ENCODE measurements at regions of chr4 and their contacts with region 1.

Region 1: GRCh38 chr4:78056265-78057129 is 626 bp upstream of the FRAS1 start:
- DNase-seq: peak; percentile 98
- H3K4me3 Mint-ChIP-seq: peak overlapping the region; percentile 78
- H3K27ac Mint-ChIP-seq: no peak overlapping the region
- H3K4me1 Mint-ChIP-seq: peaks cover 6% of the 10 kb centered on the region
- H3K27me3 Mint-ChIP-seq: no peaks in the 10 kb centered on the region
- CTCF ChIP-seq: no peak

Region 2: GRCh38 chr4:77994194-77994721 is 62.2 kb before region 1 on chr4:
- CTCF ChIA-PET with region 1: interaction called, 10 read pairs
- POLR2A ChIA-PET with region 1: interaction called, 4 read pairs
- intact Hi-C with region 1: loop called (anchors 2 kb)
- DNase-seq: peak; percentile 78
- H3K4me3 Mint-ChIP-seq: no peak overlapping the region
- H3K27ac Mint-ChIP-seq: no peak overlapping the region
- H3K4me1 Mint-ChIP-seq: peaks cover 6% of the 10 kb centered on the region
- H3K27me3 Mint-ChIP-seq: no peaks in the 10 kb centered on the region
- CTCF ChIP-seq: peak; percentile 45

Region 3: DNA sequence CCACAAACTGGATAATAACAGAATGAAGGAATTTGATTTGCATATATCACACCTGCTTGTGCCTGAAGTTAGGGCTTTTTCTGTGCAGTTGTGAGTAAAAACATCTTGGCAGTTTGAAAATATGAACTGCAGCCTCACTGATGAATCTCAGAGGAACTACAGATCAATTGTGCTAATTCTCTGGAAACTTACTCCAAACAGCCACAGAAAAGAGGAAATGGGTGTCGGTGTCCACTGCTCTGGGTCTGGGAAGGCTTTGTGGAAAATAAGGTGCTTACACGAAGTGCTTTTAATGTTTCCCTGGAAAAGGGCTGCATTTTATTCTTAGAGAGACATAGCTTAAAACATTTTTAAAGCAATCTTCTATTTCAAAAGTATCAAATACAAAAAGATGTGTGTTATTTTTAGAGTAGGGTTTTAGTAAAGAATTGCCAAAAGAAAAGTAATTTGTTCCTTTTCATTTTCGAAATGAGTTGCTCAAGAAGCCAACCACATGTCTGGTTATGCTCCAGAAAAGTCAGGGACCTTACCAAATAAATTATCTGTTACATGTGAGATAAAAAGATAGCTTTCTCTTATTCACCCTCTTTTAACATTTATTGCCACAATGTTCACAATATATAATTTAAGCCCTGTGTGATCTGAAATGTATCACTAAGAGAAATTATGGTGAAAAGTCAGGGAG is 240.8 kb after region 1 on chr4:
- CTCF ChIA-PET with region 1: no interaction called
- POLR2A ChIA-PET with region 1: no interaction called
- intact Hi-C with region 1: no loop called
- DNase-seq: no peak
- H3K4me3 Mint-ChIP-seq: no peak overlapping the region
- H3K27ac Mint-ChIP-seq: no peak overlapping the region
- H3K4me1 Mint-ChIP-seq: peaks cover 33% of the 10 kb centered on the region
- H3K27me3 Mint-ChIP-seq: no peaks in the 10 kb centered on the region
- CTCF ChIP-seq: no peak

Region 4: GRCh38 chr4:78876568-78877320 is 820.2 kb after region 1 on chr4:
- CTCF ChIA-PET with region 1: no interaction called
- POLR2A ChIA-PET with region 1: no interaction called
- intact Hi-C with region 1: loop called (anchors 10 kb)
- DNase-seq: peak; percentile 61
- H3K4me3 Mint-ChIP-seq: no peak overlapping the region
- H3K27ac Mint-ChIP-seq: no peak overlapping the region
- H3K4me1 Mint-ChIP-seq: peaks cover 5% of the 10 kb centered on the region
- H3K27me3 Mint-ChIP-seq: no peaks in the 10 kb centered on the region
- CTCF ChIP-seq: no peak